MCF 10A (cell line): ENCODE measurements at regions of chr1 and their contacts with region 1.

Region 1: GRCh38 chr1:238606896-238607295 is 716.2 kb upstream of the ZP4 start:
- DNase-seq: peak; percentile 95
- H3K4me3 Mint-ChIP-seq: no peak overlapping the region
- H3K27ac Mint-ChIP-seq: peak overlapping the region; percentile 6
- H3K4me1 Mint-ChIP-seq: peaks cover 20% of the 10 kb centered on the region
- H3K27me3 Mint-ChIP-seq: no peaks in the 10 kb centered on the region
- CTCF ChIP-seq: no peak

Region 2: DNA sequence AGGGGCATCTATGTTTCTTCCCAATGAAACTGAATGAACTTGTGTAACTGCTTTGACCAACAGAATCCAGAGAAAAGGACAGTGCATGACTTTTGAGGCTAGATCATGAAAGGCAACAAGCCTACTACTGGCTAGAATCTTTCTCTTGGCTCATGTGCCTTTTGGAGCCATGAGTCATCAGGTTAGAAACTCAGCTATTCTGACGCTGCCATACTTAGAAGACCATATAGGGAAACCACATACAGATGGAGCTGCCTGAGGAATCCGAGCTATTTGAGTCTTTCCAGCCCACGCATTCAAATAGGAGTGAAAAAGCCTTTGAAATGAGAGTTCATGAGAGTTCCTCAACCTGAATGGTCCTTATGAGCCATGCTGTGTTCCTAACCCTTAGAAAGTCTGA is 41.0 kb after region 1 on chr1:
- CTCF ChIA-PET with region 1: no interaction called
- POLR2A ChIA-PET with region 1: interaction called, 3 read pairs
- intact Hi-C with region 1: loop called (anchors 2 kb)
- DNase-seq: peak; percentile 95
- H3K4me3 Mint-ChIP-seq: no peak overlapping the region
- H3K27ac Mint-ChIP-seq: peak overlapping the region; percentile 81
- H3K4me1 Mint-ChIP-seq: peaks cover 26% of the 10 kb centered on the region
- H3K27me3 Mint-ChIP-seq: no peaks in the 10 kb centered on the region
- CTCF ChIP-seq: no peak

Region 3: GRCh38 chr1:238653693-238654321 is 46.9 kb after region 1 on chr1:
- CTCF ChIA-PET with region 1: no interaction called
- POLR2A ChIA-PET with region 1: interaction called, 3 read pairs
- intact Hi-C with region 1: loop called (anchors 2 kb)
- DNase-seq: peak; percentile 64
- H3K4me3 Mint-ChIP-seq: no peak overlapping the region
- H3K27ac Mint-ChIP-seq: peak overlapping the region; percentile 59
- H3K4me1 Mint-ChIP-seq: peaks cover 26% of the 10 kb centered on the region
- H3K27me3 Mint-ChIP-seq: no peaks in the 10 kb centered on the region
- CTCF ChIP-seq: no peak